ENCODE measurements at regions of chr20 and their contacts with region 1.

Region 1: DNA sequence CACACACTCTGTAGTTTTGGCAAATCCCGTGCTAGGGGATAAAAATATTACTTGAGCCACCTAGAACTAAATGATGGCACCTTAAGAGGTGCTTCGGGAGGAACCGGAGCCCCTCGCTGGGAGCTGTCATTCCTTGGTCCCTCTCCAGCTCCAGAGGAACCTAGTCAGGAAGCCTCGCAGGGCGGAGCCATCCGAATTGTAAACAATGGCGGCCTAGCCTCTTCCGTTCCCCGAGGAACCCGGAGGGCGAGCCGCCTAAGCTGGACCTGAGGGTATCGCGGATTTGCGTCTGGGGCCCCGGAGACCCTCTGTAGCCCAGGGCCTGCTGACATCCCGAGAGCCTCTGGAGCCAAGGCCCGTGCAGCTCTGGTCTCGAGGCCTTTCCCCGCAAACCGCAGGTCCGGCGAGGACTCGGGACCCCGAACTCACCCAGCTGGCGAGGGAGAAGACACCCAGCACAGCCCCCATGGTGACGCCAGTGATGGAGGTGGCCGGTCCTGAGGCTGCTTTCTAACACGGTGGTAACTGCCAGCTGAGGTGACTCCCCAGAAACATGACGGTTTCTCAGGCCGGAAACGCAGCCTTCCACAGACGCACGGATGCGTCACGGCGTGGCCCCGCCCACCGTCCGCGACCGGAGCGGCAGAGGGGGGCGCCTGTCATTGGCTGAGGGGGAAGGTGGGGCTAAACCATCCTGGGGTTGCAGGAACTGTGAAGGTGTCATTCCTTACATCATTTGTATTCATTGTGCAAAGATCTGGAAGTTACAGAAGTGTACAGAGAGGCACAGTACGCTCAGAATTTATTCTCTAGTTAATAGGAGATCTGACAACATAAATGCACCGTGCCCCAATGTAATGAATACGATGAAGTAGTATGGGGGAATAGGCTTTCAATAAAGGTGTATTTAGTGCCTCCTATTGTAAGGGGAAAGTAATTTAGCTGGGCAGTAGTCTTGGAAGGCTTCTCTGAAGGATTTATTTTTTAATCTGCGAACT is at the start of gene SERINC3:
- DNase-seq: peak; percentile 94
- H3K4me3 ChIP-seq: peak within 1 kb of the TSS; percentile 97
- H3K27ac ChIP-seq: peak within 1 kb of the TSS; percentile 72
- H3K4me1 ChIP-seq: peaks cover 29% of the 10 kb centered on the region
- CTCF ChIP-seq: peak; percentile 78
- total RNA-seq, gene SERINC3: 19.3 and 24.4 TPM in 2 replicates

Region 2: GRCh38 chr20:44475694-44476560 is 45.9 kb before region 1 on chr20 and contains the start of gene TTPAL:
- CTCF ChIA-PET with region 1: no interaction called
- POLR2A ChIA-PET with region 1: interaction called, 4 read pairs
- intact Hi-C with region 1: loop called (anchors 5 kb)
- DNase-seq: peak; percentile 95
- H3K4me3 ChIP-seq: peak within 1 kb of the TSS; percentile 92
- H3K27ac ChIP-seq: peak within 1 kb of the TSS; percentile 59
- H3K4me1 ChIP-seq: peaks cover 25% of the 10 kb centered on the region
- CTCF ChIP-seq: peak; percentile 46; the same call in 1 of the 2 replicates
- total RNA-seq, gene TTPAL: 3.2 and 5.6 TPM in 2 replicates